ENCODE measurements at regions of chr7 and their contacts with region 1.

Region 1: GRCh38 chr7:98168181-98168905 is 42.9 kb upstream of the BHLHA15 start:
- DNase-seq: peak; percentile 86
- ATAC-seq: peak; percentile 46
- H3K4me3 ChIP-seq: no peak overlapping the region
- H3K27ac ChIP-seq: no peak overlapping the region
- H3K4me1 ChIP-seq: peaks cover 16% of the 10 kb centered on the region
- H3K27me3 ChIP-seq: no peaks in the 10 kb centered on the region
- CTCF ChIP-seq: peak; percentile 88

Region 2: DNA sequence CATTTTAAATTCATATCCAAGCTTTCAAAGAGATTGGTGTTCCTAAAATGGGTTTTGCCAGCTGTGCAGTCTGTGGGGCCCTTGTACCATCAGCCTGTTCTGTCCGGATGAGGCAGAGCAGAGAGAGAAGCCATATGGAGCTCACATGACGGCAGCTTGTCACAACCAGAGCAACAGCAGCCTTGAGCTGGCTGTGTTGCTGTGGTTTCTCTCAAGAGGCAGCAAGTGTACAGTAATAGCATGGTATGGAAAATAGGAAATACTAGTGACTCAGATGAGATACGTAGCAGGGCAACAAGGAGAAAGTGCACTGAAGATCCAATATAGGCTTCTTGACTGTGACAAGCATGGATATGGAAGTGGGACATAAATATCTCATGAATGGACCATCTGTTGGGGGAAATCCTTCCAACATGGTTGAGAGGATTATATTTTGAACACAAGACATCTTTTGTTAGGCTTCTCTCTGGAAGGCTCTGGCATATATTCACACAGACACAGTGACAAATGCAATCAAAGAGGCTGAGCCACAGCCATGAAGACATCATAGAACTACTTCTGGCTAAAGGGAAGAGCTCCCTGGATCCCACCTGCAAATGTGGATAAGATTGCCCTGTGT is 687.5 kb before region 1 on chr7:
- CTCF ChIA-PET with region 1: no interaction called
- POLR2A ChIA-PET with region 1: no interaction called
- intact Hi-C with region 1: no loop called
- DNase-seq: no peak
- ATAC-seq: no peak
- H3K4me3 ChIP-seq: no peak overlapping the region
- H3K27ac ChIP-seq: no peak overlapping the region
- H3K4me1 ChIP-seq: no peaks in the 10 kb centered on the region
- H3K27me3 ChIP-seq: no peaks in the 10 kb centered on the region
- CTCF ChIP-seq: no peak

Region 3: DNA sequence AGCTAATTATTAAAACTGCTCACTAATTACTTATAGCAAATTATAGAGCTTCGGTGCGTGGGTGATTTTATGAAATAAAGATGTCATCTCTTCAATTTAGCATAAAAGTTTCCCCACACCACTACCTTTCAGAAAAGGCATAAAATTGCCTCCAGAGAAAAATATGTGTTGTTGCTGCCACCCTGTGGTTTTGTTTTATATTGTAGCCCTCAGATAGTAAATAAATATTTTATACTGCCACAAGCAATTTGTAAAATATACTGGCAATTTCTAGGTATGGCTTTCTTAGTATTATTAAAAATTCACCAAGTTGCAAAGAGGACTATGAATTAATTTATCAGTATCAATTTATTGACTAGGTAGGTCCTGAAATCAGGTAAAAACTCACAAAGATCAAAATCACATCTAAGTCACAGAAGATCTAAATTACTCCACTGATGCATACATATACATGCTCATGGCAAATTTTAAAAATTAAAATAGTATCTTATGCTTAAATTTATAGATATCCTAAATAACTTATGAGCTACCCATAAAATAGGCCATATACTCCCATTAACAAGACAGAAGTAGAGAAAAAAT is 322.6 kb before region 1 on chr7:
- CTCF ChIA-PET with region 1: no interaction called
- POLR2A ChIA-PET with region 1: no interaction called
- intact Hi-C with region 1: loop called (anchors 10 kb)
- DNase-seq: peak; percentile 58
- ATAC-seq: peak; percentile 44; the same call in 1 of the 2 replicates
- H3K4me3 ChIP-seq: no peak overlapping the region
- H3K27ac ChIP-seq: no peak overlapping the region
- H3K4me1 ChIP-seq: no peaks in the 10 kb centered on the region
- H3K27me3 ChIP-seq: no peaks in the 10 kb centered on the region
- CTCF ChIP-seq: peak; percentile 64

Region 4: GRCh38 chr7:98021588-98022351 is 146.6 kb before region 1 on chr7:
- CTCF ChIA-PET with region 1: interaction called, 72 read pairs
- POLR2A ChIA-PET with region 1: interaction called, 3 read pairs
- intact Hi-C with region 1: loop called (anchors 1 kb)
- DNase-seq: peak; percentile 77
- ATAC-seq: peak; percentile 96
- H3K4me3 ChIP-seq: no peak overlapping the region
- H3K27ac ChIP-seq: no peak overlapping the region
- H3K4me1 ChIP-seq: no peaks in the 10 kb centered on the region
- H3K27me3 ChIP-seq: no peaks in the 10 kb centered on the region
- CTCF ChIP-seq: peak; percentile 82

Region 5: GRCh38 chr7:98106647-98107445 is 61.5 kb before region 1 on chr7 and contains the start of gene LMTK2:
- CTCF ChIA-PET with region 1: interaction called, 8 read pairs
- POLR2A ChIA-PET with region 1: no interaction called
- intact Hi-C with region 1: loop called (anchors 1 kb)
- DNase-seq: peak; percentile 90
- ATAC-seq: peak; percentile 98
- H3K4me3 ChIP-seq: peak within 1 kb of the TSS; percentile 80
- H3K27ac ChIP-seq: peak within 1 kb of the TSS; percentile 82
- H3K4me1 ChIP-seq: peaks cover 12% of the 10 kb centered on the region
- H3K27me3 ChIP-seq: no peaks in the 10 kb centered on the region
- CTCF ChIP-seq: peak; percentile 85
- total RNA-seq, gene LMTK2: 9.0 and 16.0 TPM in 2 replicates

Region 6: GRCh38 chr7:98133181-98133580 is 35.2 kb before region 1 on chr7:
- CTCF ChIA-PET with region 1: interaction called, 3 read pairs
- POLR2A ChIA-PET with region 1: no interaction called
- intact Hi-C with region 1: loop called (anchors 1 kb)
- DNase-seq: peak; percentile 73
- ATAC-seq: peak; percentile 58
- H3K4me3 ChIP-seq: peak overlapping the region; percentile 16; the same call in 1 of the 2 replicates
- H3K27ac ChIP-seq: peak overlapping the region; percentile 64
- H3K4me1 ChIP-seq: peaks cover 57% of the 10 kb centered on the region
- H3K27me3 ChIP-seq: no peaks in the 10 kb centered on the region
- CTCF ChIP-seq: no peak

Measured in PC-3 (cell line).